Activated B cell treated with CpG ODN at 0.5 μM for 24 hours (primary cell): ENCODE measurements at regions of chr16 and their contacts with region 1.

Region 1: GRCh38 chr16:57535680-57536305 is 578 bp downstream of the CCDC102A start:
- DNase-seq: peak; percentile 87
- ATAC-seq: peak; percentile 70
- H3K4me3 Mint-ChIP-seq: peak overlapping the region; percentile 85
- H3K27ac Mint-ChIP-seq: peak overlapping the region; percentile 89
- H3K4me1 Mint-ChIP-seq: peaks cover 83% of the 10 kb centered on the region
- H3K27me3 Mint-ChIP-seq: no peaks in the 10 kb centered on the region
- CTCF ChIP-seq: no peak

Region 2: DNA sequence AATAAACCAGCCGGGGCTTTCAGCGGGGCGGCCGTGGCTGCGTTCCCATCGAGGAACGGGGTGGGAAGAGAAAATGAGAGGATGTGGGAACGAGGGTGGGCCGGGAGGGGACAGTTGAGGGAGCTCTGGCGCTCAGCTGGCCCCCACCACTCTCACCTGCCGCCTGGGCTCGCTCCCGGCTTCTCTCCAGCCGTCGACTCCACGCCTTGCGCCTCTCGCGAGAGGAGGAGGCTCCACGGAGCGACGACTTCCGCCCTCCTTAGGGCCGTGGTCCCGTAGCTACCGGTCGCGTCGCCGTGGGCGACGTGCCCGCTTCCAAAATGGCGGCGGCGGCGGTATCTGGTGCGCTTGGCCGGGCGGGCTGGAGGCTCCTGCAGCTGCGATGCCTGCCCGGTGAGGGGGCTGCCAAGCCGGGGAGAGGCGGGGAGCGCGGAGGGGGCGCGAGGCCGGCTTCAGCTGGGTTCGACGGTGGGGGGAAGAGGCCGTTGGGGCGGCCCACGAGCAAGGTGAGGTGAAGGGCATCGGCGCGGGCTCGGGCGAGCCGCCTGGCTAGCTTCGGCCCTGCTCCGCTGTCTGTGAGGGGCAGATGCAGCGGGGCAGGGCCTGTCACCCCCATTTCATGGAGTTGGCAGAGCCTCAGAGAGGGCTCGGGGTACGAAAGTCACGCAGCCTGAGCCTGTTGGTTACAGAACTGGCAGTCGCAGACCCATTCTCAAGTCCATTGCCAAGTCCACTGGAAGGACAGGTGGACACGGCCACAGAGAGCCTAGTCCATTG is 88.4 kb before region 1 on chr16 and contains the starts of genes CIAPIN1 and COQ9:
- CTCF ChIA-PET with region 1: no interaction called
- POLR2A ChIA-PET with region 1: interaction called, 19 read pairs
- intact Hi-C with region 1: no loop called
- DNase-seq: peak; percentile 82
- ATAC-seq: peak; percentile 98
- H3K4me3 Mint-ChIP-seq: peak within 1 kb of the TSS; percentile 91
- H3K27ac Mint-ChIP-seq: peak within 1 kb of the TSS; percentile 84
- H3K4me1 Mint-ChIP-seq: peaks cover 19% of the 10 kb centered on the region
- H3K27me3 Mint-ChIP-seq: no peaks in the 10 kb centered on the region
- CTCF ChIP-seq: no peak
- total RNA-seq, gene CIAPIN1: 47.1 and 52.3 TPM in 2 replicates
- total RNA-seq, gene COQ9: 30.4 and 34.1 TPM in 2 replicates

Region 3: DNA sequence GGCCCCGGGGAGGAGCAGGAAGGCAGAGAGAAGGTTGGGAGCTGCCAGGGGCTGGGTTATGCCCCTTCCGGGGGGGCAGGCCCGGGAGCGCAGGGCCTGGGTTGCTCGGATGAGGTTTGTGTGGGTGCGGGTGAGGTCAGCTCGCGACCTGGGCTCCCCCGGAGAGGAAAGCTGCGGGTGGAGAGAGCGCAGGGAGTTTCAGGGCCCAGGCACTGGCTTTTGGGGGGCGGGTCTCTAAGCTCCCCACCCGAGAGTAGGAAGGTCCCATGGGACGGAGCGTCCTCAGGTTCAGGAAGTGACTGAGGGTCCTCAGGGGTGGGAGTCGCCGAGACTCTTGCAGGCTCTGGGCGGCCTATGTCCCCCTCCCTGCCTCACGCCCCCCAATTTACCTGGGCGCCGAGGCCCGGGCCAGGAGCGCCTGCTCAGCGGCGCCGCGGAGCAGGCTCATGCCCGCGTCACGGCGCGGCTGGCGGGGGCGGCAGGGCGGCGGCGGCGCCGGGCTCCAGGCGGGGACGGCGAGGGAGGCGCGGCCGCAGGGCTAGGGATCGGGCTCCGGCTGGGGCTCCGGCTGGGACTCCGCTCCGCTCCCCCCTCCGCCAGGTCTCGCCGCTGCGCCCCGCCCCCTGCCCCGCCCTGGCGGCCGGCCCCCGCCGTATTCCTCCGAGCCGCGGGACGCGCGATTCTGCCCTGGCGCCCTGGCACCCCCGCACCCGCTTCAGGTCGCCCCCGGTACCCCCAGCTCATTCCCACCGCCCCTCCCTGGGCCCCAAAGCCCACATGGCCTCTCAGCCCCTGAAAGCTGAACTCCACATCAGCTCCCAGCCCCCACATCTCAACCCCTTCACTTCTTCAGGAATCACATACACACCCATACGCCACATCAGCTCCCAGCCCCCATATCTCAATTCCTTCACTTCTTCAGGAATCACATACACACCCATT is 49.6 kb before region 1 on chr16 and contains the start of gene DOK4:
- CTCF ChIA-PET with region 1: no interaction called
- POLR2A ChIA-PET with region 1: interaction called, 5 read pairs
- intact Hi-C with region 1: loop called (anchors 2 kb)
- DNase-seq: peak; percentile 78
- ATAC-seq: peak; percentile 96
- H3K4me3 Mint-ChIP-seq: peak within 1 kb of the TSS; percentile 82
- H3K27ac Mint-ChIP-seq: no peak within 1 kb of the TSS
- H3K4me1 Mint-ChIP-seq: peaks cover 16% of the 10 kb centered on the region
- H3K27me3 Mint-ChIP-seq: peaks cover 4% of the 10 kb centered on the region
- CTCF ChIP-seq: no peak
- total RNA-seq, gene DOK4: 0.66 and 0.73 TPM in 2 replicates

Region 4: DNA sequence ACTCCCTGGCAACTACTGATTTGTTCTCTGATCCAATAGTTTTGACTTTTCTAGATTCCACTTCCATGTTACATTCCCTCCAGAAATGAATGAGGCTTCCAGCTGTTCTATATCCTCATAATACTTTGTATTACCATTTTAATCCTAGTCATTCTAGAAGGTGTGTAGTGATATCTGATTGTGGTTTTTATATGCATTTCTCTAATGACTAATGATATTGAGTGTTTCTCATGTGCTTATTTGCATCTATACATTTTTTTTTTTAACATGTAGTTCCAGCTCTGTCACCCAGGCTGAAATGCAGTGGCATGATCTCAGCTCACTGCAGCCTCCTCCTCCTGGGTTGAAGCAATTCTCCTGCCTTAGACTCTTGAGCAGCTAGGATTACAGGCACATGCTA is 13.9 kb after region 1 on chr16:
- CTCF ChIA-PET with region 1: no interaction called
- POLR2A ChIA-PET with region 1: interaction called, 26 read pairs
- intact Hi-C with region 1: loop called (anchors 1 kb)
- DNase-seq: no peak
- ATAC-seq: no peak
- H3K4me3 Mint-ChIP-seq: no peak overlapping the region
- H3K27ac Mint-ChIP-seq: peak overlapping the region; percentile 46
- H3K4me1 Mint-ChIP-seq: peaks cover 81% of the 10 kb centered on the region
- H3K27me3 Mint-ChIP-seq: no peaks in the 10 kb centered on the region
- CTCF ChIP-seq: no peak